ENCODE measurements at regions of chr5 and their contacts with region 1.

Region 1: DNA sequence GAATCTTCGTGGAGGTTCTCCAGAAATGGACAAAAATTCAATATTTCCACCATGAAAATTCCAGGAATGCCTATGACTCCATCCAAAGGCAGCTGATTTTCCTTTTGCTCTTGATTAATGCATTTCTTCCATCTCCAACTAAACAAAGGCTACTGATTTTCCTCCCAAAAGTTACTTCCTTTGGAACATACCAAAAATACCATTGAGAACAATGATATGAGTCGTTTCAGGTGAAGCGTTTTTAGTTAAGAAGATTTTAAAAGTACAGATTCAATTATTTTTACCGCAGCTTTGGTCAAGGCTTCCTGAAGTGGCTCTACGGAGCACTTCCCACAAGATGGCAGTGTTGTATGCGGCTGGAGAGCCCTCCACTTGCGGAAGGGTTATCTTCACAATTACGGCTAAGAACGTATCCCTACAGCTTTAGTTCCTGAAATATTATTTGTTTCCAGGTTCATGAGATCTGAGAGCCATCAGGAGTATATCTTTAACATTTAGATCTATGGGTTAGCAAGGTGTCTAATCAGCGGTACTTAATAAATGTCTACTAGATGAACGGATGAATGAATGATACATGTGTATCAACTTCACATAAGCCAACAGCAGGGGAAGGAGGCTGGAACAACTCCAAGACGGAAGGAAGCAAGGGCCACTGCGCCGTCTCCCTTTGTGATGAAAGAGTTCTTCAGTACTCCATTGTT is 35.9 kb upstream of the ARSB start:
- DNase-seq: no peak
- ATAC-seq: peak; percentile 71

Region 2: DNA sequence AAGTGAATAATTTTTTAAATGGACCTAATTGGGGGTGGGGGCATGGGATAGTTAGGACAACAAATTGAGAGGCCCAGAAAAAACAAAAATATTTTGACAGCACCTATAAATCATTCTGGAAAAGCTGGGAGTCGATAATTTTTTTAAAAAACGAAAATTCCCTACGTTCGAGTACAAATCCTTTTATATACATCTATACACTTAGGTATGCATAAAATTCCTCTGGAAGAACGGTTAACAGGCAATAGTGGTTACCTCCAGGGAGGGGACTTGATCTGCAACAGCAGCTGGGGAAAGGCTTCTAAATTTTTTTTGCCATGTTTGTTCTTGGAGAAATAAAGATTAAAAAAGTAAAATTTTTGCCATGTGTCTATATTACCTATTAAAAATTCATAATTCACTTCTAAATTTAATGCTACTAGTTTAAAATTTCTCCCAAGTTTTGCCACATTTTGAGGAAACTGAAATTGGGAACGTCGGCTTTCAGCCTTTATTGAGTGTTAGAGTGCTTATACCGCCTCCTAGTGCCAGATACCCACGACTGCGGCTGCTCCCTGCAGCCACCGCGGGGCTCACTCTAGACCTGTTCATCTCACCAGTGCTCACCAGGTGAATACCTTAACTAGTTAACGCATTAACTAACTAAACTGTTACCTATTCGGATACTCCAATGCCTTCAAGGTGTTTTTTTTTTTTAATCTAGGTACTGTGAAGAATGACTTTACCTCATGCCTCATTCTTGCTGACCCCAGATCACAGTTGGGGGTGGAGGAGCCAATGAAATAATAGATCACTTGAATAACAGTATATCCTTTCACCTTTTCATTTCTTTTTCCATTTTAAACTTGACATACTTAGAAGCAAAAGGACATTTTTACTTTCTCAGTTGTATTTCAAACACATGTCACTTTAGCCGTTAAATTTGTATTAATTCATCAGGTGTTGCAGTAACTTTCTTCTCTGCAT is 88.8 kb after region 1 on chr5:
- intact Hi-C with region 1: loop called (anchors 1 kb)
- DNase-seq: no peak
- ATAC-seq: no peak

Region 3: DNA sequence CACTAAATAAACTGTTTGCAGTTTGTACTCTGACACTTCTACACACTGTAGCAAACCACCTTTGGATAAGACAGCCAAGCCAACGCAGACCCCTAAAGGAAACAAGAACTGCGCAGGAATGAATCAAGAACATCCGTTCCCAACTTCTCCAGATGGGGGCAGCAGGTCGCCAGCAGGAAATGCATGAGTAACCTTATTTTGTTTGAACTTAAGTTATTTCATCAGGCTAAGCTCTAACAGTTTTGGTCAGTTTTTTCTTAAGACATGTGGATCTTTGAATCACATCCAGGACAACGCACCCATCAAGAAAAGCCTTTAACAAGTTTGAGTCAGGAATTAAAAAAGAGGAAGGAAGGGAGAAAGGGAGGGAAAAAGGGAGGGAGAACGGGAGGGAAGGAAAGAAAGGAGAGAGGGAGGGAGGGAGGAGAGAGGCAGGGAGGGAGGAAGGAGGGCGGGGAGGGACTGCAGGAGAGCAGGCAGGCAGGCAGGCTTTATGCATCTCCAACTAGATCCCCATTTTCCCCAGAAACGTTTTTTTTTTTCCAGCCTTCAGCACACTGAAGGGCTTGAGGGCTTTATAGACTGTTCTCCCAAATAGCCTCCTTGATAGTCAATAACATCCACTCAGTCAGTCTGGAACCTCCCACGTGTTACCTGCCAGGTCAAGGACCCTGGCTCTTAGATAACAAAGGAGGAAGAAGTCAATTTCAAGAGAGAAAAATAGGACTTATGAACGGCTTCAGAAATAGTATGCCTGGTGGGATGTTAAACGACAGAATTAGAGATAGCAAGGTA is 112.8 kb after region 1 on chr5:
- intact Hi-C with region 1: loop called (anchors 1 kb)
- DNase-seq: no peak
- ATAC-seq: peak; percentile 82

Region 4: GRCh38 chr5:79200573-79201183 is 179.7 kb after region 1 on chr5:
- intact Hi-C with region 1: no loop called
- DNase-seq: no peak
- ATAC-seq: no peak

Region 5: GRCh38 chr5:79464695-79465332 is 443.8 kb after region 1 on chr5:
- intact Hi-C with region 1: loop called (anchors 5 kb)
- DNase-seq: no peak
- ATAC-seq: peak; percentile 20

Region 6: DNA sequence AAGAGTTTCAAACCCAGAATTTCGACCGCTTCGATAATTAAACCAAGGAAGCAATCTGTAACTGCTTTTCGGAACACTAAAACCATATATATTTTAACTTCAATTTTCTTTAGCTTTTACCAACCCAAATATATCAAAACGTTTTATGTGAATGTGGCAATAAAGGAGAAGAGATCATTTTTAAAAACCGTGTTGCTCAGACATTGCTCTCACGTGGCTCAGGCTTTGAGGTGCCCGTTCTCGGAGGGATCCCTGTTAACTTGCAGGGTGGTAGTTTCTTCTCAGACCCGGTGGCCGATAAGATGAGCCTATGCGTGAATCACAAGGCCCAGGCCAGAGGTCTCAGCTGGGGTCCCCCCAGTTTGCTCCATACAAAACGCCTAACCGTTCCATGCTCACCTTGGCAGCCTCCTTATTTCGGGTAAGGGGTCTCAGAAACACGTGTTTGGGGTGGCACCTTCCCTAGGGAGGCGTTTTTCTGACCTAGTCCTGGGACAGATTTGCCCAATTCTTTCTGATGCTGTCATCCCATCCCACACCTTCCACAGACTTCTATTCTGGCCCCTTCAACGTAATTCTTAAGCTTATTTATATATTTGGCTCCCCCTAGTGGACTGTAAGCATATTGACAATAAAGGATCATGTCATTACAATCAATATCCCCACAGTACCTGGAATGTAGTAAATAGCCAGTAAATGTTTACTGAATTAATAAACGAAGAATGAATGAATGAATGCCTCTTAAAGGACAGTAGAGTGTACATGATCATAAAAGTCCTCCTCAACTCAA is 1062.3 kb after region 1 on chr5:
- intact Hi-C with region 1: loop called (anchors 10 kb)
- DNase-seq: no peak
- ATAC-seq: peak; percentile 88